Activated CD8-positive, alpha-beta memory T cell treated with anti-CD3 and anti-CD28 coated beads, Interleukin-2, amount 10 ng/mL, durations not matched to agents 7 days and 5 days (primary cell): ENCODE measurements at regions of chr5 and their contacts with region 1.

Region 1: GRCh38 chr5:34538026-34538672 is 118.0 kb upstream of the RAI14 start:
- DNase-seq: no peak
- ATAC-seq: no peak
- H3K4me3 Mint-ChIP-seq: no peak overlapping the region
- H3K27ac Mint-ChIP-seq: no peak overlapping the region
- H3K4me1 Mint-ChIP-seq: peaks cover 12% of the 10 kb centered on the region
- H3K27me3 Mint-ChIP-seq: peaks cover 36% of the 10 kb centered on the region

Region 2: DNA sequence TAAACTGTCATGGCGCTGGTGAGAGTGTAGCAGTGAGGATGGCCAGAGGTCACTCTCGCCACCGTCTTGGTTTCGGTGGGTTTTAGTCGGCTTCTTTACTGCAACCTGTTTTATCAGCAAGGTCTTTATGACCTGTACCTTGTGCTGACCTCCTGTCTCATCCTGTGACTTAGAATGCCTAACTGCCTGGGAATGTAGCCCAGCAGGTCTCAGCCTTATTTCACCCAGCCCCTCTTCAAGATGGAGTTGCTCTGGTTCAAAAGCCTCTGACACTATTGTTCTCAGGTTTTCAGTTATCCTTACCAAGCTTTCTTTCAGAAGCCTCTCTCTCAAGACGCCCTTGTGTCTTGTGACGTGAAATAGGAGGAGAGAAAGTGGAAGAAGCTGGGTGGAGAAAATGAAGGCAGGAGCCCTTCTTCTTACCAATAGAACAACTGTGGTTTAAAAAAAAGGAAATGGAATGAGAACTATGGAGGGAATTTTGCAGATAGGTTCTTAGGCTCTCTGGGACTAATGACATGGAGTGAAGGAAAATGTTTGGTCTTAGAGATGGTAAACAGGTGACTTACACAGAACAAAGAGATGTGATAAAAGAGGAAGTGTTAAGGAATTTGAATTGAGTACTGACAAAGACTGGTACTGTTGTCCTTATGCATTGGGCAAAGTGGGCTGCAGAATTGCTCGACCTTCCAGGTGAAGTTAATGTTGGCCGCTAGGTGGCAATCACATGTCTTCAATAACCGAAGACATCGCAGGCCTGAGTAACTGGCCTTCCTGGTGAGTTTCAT is 15.4 kb before region 1 on chr5:
- CTCF ChIA-PET with region 1: interaction called, 11 read pairs
- DNase-seq: peak; percentile 63
- ATAC-seq: peak; percentile 45
- H3K4me3 Mint-ChIP-seq: no peak overlapping the region
- H3K27ac Mint-ChIP-seq: no peak overlapping the region
- H3K4me1 Mint-ChIP-seq: peaks cover 2% of the 10 kb centered on the region
- H3K27me3 Mint-ChIP-seq: peaks cover 10% of the 10 kb centered on the region